ENCODE measurements at regions of chr1 and their contacts with region 1.

Region 1: DNA sequence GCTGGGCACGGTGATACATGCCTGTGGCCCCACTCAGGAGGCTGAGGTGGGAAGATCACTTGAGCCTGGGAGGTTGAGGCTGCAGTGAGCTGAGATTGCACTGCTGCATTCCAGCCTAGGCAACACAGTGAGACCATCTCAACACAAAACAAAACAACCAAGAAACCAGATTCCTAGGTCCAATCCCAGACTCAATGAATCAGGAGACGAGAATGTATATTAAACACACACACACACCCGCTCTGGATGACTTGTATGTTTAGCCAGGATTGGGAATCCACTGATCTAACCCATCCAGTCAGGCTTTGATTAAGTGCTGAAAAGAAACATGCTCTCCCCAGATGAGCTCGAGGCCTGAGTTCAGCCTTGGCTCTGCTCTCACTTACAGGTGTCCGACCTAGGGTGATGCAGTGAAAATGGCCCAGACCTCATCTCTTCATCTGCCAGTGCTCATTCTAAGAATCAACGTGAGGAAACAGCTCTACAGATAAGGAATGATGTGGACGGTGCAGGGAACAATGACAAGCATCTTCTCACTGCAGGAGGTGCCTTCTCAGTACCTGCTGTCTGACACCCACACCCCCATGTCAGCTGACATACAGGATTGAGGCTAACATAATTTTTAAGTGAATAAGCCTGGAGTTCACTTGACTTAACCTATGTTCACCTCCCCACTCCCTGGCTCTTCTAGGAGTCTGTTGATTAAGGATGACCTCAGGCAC is 15.3 kb upstream of the SRSF4 start:
- DNase-seq: no peak
- H3K4me3 ChIP-seq: no peak overlapping the region
- H3K27ac ChIP-seq: no peak overlapping the region
- H3K4me1 ChIP-seq: peaks cover 2% of the 10 kb centered on the region
- H3K27me3 ChIP-seq: no peaks in the 10 kb centered on the region
- CTCF ChIP-seq: no peak

Region 2: DNA sequence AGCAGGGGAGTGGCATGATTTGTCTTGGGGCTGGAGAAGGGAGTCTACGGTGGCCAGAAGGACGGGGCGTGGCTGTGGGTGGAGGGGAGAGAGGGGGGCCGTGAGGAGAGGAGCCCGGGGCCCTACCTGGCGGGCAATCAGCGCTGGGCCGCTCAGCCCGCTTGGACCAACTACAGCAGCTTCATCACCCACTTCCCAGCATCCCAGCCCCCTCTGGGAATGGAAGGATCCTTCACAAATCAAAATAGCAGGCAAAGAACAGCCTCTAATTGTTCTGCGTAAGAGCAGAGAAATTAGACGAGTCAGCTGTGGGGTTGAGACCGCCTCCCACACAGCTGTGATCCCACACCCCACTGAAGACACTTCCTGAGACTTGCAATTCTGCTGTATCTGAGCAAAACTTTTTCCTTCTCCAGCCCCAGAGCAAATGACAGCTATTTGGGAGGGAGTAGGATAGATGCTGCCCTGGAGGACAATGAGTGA is 341.5 kb before region 1 on chr1:
- CTCF ChIA-PET with region 1: interaction called, 10 read pairs
- POLR2A ChIA-PET with region 1: no interaction called
- intact Hi-C with region 1: no loop called
- DNase-seq: no peak
- H3K4me3 ChIP-seq: no peak overlapping the region
- H3K27ac ChIP-seq: no peak overlapping the region
- H3K4me1 ChIP-seq: no peaks in the 10 kb centered on the region
- H3K27me3 ChIP-seq: peaks cover 4% of the 10 kb centered on the region; the same call in 1 of the 2 replicates
- CTCF ChIP-seq: no peak

Region 3: GRCh38 chr1:29245876-29246275 is 48.9 kb after region 1 on chr1:
- CTCF ChIA-PET with region 1: no interaction called
- POLR2A ChIA-PET with region 1: no interaction called
- intact Hi-C with region 1: no loop called
- DNase-seq: peak in 1 of 2 experiments; percentile 35
- H3K4me3 ChIP-seq: no peak overlapping the region
- H3K27ac ChIP-seq: no peak overlapping the region
- H3K4me1 ChIP-seq: peaks cover 32% of the 10 kb centered on the region
- H3K27me3 ChIP-seq: no peaks in the 10 kb centered on the region
- CTCF ChIP-seq: peak; percentile 43; the same call in 1 of the 2 replicates

Measured in PC-9 (cell line).